ENCODE measurements at regions of chr16 and their contacts with region 1.

Region 1: DNA sequence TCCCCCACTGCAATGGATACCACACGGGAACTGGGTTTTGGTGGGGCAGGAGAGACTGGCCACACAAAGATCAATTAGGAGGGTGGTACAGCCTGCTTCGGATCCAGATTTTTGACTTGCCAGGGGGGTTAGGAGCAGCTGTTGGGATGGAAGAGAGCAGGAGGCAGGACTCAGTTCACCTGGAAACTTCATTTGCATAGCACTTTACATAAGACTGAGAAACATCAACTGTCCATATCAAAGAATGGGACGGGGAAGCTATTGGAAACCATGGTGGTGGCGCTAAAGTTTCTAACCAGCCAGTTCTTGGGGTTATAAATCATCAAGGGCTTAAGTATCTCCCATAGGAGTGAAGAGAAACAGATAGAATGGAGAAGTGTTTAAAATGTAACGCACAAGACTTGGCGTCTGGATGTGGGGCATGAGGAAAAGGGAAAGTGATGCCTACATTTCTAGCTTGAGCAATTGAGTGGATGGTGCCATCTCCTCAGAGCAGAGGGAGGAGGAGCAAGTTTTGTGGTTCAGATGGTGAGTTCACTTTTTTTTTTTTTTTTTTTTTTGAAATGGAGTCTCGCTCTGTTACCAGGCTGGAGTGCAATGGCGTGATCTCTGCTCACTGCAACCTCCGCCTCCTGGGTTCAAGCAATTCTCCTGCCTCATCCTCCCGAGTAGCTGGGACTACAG is 6.4 kb upstream of the SRCAP start:
- DNase-seq: no peak
- H3K4me3 ChIP-seq: peak overlapping the region in 1 of 4 experiments; percentile 15; a peak in 1 of 8 replicates
- H3K27ac ChIP-seq: no peak overlapping the region
- H3K4me1 ChIP-seq: peaks cover 0 to 5% (median 3%) of the 10 kb centered on the region in 4 experiments; a peak in 6 of 7 replicates
- H3K27me3 ChIP-seq: peaks cover 68 to 94% (median 83%) of the 10 kb centered on the region in 4 experiments
- CTCF ChIP-seq: no peak
- EP300 ChIP-seq: no peak
- POLR2A ChIP-seq: no peak
- RAD21 ChIP-seq: no peak

Region 2: DNA sequence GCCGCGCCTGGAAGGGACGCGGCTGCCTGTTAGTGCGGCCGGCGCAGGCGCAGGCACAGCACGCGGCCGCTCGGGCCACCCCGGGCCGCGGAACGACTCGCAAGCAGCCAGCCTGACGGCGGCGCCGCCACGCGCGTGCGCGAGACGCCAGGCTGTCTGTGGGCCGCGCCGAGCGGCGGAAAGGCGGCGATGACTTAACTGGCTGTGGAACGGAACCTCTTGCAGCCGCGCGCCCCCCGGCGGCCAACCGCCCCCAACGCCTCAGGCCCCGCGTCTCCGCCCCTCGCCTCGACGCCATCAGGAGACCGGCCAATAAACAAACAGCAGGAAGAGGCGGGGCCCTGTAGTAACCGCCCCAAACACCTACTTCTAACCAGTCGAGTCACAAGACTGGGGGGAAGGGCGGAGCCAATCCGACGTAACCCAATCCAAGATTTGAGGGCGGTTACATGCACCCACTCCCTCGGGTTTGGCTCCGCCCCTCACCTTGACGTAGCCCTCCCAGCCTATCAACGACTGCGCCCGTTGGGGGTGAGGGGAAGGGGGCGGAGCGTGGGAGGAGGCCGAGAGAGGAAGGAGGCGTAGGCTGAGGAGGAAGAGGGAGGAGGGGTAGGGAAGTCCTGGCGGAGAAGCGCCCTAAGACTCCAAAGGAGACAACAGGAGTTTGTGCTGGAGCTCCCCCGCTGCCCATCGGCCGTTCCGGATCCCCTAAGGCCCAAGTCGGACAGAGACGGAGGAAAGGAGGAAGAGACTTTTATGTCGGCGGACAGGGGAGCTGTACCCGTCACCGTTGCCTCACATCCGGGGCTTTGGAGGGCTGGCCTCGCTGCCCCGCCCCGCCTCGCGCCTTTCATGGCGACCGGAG is 34.4 kb before region 1 on chr16 and contains the start of gene FBRS:
- CTCF ChIA-PET with region 1: interaction called, 48 read pairs
- POLR2A ChIA-PET with region 1: interaction called, 14 read pairs
- DNase-seq: peak; percentile 98 to 100
- H3K4me3 ChIP-seq: peak within 1 kb of the TSS; percentile 61 to 96 (median 78)
- H3K27ac ChIP-seq: peak within 1 kb of the TSS; percentile 91
- H3K4me1 ChIP-seq: peaks cover 2 to 13% (median 6%) of the 10 kb centered on the region in 4 experiments; a peak in 6 of 7 replicates
- H3K27me3 ChIP-seq: peaks cover 2 to 35% (median 22%) of the 10 kb centered on the region in 4 experiments
- CTCF ChIP-seq: peak; percentile 74 to 79 (median 77)
- EP300 ChIP-seq: peak in 1 of 2 experiments; percentile 69; a peak in 1 of 3 replicates
- POLR2A ChIP-seq: 0 out of 3 replicates have a peak, but pooled peaks of 1 of the 2 experiments have one; percentile 43
- RAD21 ChIP-seq: peak; percentile 46 to 61
- total RNA-seq, gene FBRS: 12.9 and 13.9 TPM in 2 replicates

Region 3: DNA sequence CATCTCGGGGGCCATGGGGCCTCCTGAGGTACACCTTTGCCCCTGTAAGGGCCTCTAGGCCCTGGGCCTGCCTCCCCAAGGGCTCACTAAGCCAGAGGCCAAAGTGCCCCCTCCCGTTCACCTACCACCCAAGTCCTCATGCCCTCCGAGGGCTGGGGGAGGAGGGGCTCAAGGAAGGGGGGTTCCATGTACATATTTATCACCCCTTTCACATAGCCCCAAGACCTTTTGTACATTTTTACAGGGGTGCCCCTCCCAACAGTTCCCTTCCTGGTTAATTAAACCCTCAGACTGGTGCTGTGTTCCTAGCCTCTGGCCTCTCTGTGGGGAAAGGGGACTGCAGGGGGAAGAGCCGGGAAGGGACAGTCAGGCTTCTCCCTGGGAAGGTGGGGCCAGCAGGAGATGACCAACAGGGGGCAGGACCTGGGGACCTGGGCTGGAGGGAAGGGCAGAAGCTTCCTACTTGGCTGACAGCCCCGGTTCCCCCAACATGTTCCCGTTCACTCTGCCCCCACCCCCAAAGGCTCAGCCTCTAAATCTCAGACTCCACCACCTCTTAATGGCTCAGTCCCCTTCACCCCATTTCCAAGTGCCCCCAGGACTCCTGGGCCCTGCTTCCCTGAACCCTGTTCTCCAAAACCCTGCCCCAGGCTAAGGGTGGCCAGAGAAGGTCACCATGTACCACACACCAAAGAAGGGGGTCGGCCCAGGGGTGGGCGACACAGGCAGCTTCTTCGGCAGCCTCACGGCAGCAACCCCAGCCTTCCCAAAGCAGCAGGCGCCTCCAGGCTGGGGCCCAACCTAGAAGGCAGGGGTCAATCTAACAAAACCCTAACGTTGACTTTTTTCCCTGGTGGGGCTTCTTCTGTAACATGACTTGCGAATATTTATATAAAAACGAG is 22.4 kb before region 1 on chr16:
- CTCF ChIA-PET with region 1: interaction called, 13 read pairs
- POLR2A ChIA-PET with region 1: interaction called, 8 read pairs
- DNase-seq: no peak
- H3K4me3 ChIP-seq: no peak overlapping the region
- H3K27ac ChIP-seq: no peak overlapping the region
- H3K4me1 ChIP-seq: no peaks in the 10 kb centered on the region
- H3K27me3 ChIP-seq: peaks cover 51 to 96% (median 79%) of the 10 kb centered on the region in 4 experiments
- CTCF ChIP-seq: peak in 1 of 3 experiments; percentile 13; a peak in 1 of 4 replicates
- EP300 ChIP-seq: no peak
- POLR2A ChIP-seq: no peak
- RAD21 ChIP-seq: no peak

Region 4: GRCh38 chr16:30677931-30678585 is 14.5 kb before region 1 on chr16:
- CTCF ChIA-PET with region 1: interaction called, 15 read pairs
- POLR2A ChIA-PET with region 1: interaction called, 16 read pairs
- DNase-seq: peak; percentile 71 to 87
- H3K4me3 ChIP-seq: no peak overlapping the region
- H3K27ac ChIP-seq: no peak overlapping the region
- H3K4me1 ChIP-seq: peaks cover 0 to 3% (median 3%) of the 10 kb centered on the region in 4 experiments; a peak in 4 of 7 replicates
- H3K27me3 ChIP-seq: peaks cover 76 to 95% (median 94%) of the 10 kb centered on the region in 4 experiments
- CTCF ChIP-seq: no peak
- EP300 ChIP-seq: peak in 1 of 2 experiments; percentile 62; a peak in 1 of 3 replicates
- POLR2A ChIP-seq: no peak
- RAD21 ChIP-seq: no peak